ENCODE measurements at regions of chr2 and their contacts with region 1.

Region 1: GRCh38 chr2:190648289-190649034 is 421 bp upstream of the NAB1 start:
- DNase-seq: peak; percentile 17
- ATAC-seq: peak; percentile 75
- H3K4me3 ChIP-seq: peak overlapping the region; percentile 69
- H3K27ac ChIP-seq: peak overlapping the region; percentile 59
- H3K4me1 ChIP-seq: no peaks in the 10 kb centered on the region
- H3K27me3 ChIP-seq: no peaks in the 10 kb centered on the region
- CTCF ChIP-seq: no peak
- EP300 ChIP-seq: peak in 1 of 2 experiments; percentile 58; a peak in 1 of 4 replicates
- POLR2A ChIP-seq: peak; percentile 19; the same call in 1 of the 2 replicates
- RAD21 ChIP-seq: 0 out of 2 replicates have a peak, but pooled peaks have one; percentile 10

Region 2: GRCh38 chr2:190376591-190377245 is 271.7 kb before region 1 on chr2:
- CTCF ChIA-PET with region 1: no interaction called
- POLR2A ChIA-PET with region 1: no interaction called
- RAD21 ChIA-PET with region 1: no interaction called
- SMC1A ChIA-PET with region 1: no interaction called
- in situ Hi-C with region 1: no loop called
- intact Hi-C with region 1: no loop called
- DNase-seq: no peak
- ATAC-seq: no peak
- H3K4me3 ChIP-seq: no peak overlapping the region
- H3K27ac ChIP-seq: no peak overlapping the region
- H3K4me1 ChIP-seq: no peaks in the 10 kb centered on the region
- H3K27me3 ChIP-seq: no peaks in the 10 kb centered on the region
- CTCF ChIP-seq: no peak
- EP300 ChIP-seq: no peak
- POLR2A ChIP-seq: no peak
- RAD21 ChIP-seq: no peak

Region 3: DNA sequence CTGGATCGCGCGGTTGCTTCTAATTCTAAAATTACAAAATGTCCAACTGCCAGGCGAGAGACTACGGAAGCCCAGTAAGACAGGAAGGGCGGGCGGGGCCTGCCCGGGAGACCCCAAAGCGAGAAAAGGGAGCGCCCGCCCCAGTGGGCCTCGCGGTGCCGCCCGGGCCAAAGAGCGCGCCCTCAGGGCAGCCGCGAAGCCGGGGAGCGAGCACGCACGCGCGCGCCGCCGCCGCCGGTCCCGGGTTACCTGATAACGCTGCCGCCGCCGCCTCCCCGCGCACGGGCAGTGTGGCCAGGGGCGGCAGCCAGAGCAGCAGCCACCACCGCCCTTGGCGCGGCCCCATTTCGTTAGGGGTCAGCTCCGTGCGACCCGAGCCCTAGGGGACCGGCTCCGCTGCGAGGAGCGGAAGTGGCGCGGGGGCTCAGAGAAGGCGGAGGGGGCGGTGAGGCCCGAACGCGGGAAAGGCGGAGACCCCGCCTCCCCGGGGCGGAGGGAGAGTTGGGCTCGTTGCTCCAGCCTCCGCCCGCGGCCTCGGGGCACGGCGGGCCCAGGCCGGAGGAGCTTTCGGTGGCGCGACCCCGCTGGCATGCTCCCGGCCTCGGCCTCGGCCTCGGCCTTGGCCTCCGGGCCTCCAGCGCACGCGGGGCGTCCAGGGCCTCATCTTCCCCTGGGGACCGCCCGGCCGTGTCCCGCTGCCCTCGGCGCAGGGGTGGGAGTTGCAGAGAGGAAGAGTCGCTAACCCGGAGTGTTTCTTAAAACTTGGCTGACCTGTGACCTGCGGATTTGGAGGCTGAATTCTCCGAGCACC is 113.9 kb before region 1 on chr2 and contains the start of gene NEMP2:
- CTCF ChIA-PET with region 1: no interaction called
- POLR2A ChIA-PET with region 1: interaction called, 4 read pairs
- RAD21 ChIA-PET with region 1: interaction called, 14 read pairs
- SMC1A ChIA-PET with region 1: interaction called, 18 read pairs
- in situ Hi-C with region 1: no loop called
- intact Hi-C with region 1: loop called (anchors 2 kb)
- DNase-seq: no peak
- ATAC-seq: peak; percentile 80
- H3K4me3 ChIP-seq: peak within 1 kb of the TSS; percentile 88
- H3K27ac ChIP-seq: peak within 1 kb of the TSS; percentile 97
- H3K4me1 ChIP-seq: peaks cover 21% of the 10 kb centered on the region
- H3K27me3 ChIP-seq: no peaks in the 10 kb centered on the region
- CTCF ChIP-seq: no peak
- EP300 ChIP-seq: no peak
- POLR2A ChIP-seq: peak; percentile 94
- RAD21 ChIP-seq: no peak
- polyA plus RNA-seq, gene NEMP2: 2.3 to 3.6 TPM

Region 4: DNA sequence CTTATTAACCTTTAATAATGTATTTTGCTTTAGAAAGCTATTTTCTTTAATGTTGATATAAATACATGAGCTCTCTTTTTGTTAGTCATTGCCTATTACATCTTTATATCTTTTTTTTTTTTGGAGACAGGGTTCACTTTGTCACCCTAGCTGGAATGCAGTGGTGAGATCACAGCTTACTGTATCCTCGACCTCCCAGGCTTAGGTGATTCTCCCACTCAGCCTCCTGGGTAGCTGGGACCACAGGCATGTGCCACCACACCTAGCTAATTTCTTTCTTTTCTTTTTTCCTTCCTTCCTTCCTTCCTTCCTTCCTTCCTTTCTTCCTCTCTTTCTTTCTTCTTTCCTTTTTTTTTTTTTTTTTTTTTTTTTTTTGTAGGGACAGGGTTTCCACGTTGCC is 15.8 kb after region 1 on chr2:
- CTCF ChIA-PET with region 1: interaction called, 50 read pairs
- POLR2A ChIA-PET with region 1: interaction called, 65 read pairs
- RAD21 ChIA-PET with region 1: interaction called, 77 read pairs
- SMC1A ChIA-PET with region 1: interaction called, 197 read pairs
- in situ Hi-C with region 1: no loop called
- intact Hi-C with region 1: no loop called
- DNase-seq: no peak
- ATAC-seq: no peak
- H3K4me3 ChIP-seq: no peak overlapping the region
- H3K27ac ChIP-seq: no peak overlapping the region
- H3K4me1 ChIP-seq: peaks cover 7% of the 10 kb centered on the region; the same call in 1 of the 2 replicates
- H3K27me3 ChIP-seq: no peaks in the 10 kb centered on the region
- CTCF ChIP-seq: no peak
- EP300 ChIP-seq: no peak
- POLR2A ChIP-seq: no peak
- RAD21 ChIP-seq: no peak

Region 5: GRCh38 chr2:190698895-190699294 is 50.4 kb after region 1 on chr2:
- CTCF ChIA-PET with region 1: interaction called, 9 read pairs
- POLR2A ChIA-PET with region 1: interaction called, 8 read pairs
- RAD21 ChIA-PET with region 1: interaction called, 16 read pairs
- SMC1A ChIA-PET with region 1: interaction called, 33 read pairs
- in situ Hi-C with region 1: no loop called
- intact Hi-C with region 1: no loop called
- DNase-seq: no peak
- ATAC-seq: no peak
- H3K4me3 ChIP-seq: no peak overlapping the region
- H3K27ac ChIP-seq: no peak overlapping the region
- H3K4me1 ChIP-seq: peaks cover 25% of the 10 kb centered on the region
- H3K27me3 ChIP-seq: no peaks in the 10 kb centered on the region
- CTCF ChIP-seq: no peak
- EP300 ChIP-seq: no peak
- POLR2A ChIP-seq: no peak
- RAD21 ChIP-seq: no peak

Region 6: GRCh38 chr2:190718652-190719526 is 70.4 kb after region 1 on chr2:
- CTCF ChIA-PET with region 1: interaction called, 4 read pairs
- POLR2A ChIA-PET with region 1: interaction called, 6 read pairs
- RAD21 ChIA-PET with region 1: interaction called, 11 read pairs
- SMC1A ChIA-PET with region 1: interaction called, 13 read pairs
- in situ Hi-C with region 1: no loop called
- intact Hi-C with region 1: no loop called
- DNase-seq: peak; percentile 68
- ATAC-seq: peak; percentile 81
- H3K4me3 ChIP-seq: no peak overlapping the region
- H3K27ac ChIP-seq: peak overlapping the region; percentile 57
- H3K4me1 ChIP-seq: peaks cover 41% of the 10 kb centered on the region
- H3K27me3 ChIP-seq: no peaks in the 10 kb centered on the region
- CTCF ChIP-seq: peak in 1 of 3 experiments; percentile 19; a peak in 1 of 6 replicates
- EP300 ChIP-seq: peak; percentile 71 to 75; a peak in 3 of 4 replicates
- POLR2A ChIP-seq: 0 out of 2 replicates have a peak, but pooled peaks have one; percentile 38
- RAD21 ChIP-seq: peak; percentile 32; the same call in 1 of the 2 replicates

Measured in GM12878 (cell line).